Heart left ventricle (tissue), 16 donors: ENCODE measurements at regions of chr17 and their contacts with region 1.

Region 1: DNA sequence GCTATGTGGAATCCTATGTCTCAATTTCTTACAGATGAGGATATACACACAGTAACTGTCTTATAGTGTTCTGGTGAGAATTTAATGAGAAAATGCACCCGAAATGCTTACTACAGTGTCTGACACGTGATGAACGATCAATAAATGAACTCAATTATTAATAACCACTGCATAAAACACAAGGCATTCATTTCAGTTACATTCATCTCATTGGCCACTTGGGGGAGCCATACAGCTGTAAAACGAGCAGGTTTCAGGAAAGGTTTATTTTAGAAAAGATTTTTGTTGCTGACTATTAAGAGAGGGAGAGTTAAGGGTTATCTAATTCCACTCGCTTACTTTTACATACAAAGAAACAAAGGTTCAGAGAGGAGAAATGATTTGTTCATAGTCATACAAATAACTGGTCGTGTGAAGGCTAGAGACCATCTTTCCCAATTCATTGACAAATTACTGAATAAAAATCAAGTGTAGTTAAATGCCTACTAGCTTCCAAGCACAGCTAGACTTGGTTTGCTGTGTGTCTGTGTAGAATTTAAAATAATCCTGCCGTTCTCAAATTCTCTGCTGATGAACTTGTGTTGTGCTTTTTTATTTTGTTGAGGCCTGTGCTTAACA is 160.1 kb downstream of the MAP2K4 start:
- DNase-seq: peak in 1 of 5 donors; percentile 10
- ATAC-seq: peak in 2 of 4 donors; percentile 42 to 63
- H3K4me3 ChIP-seq: no peak overlapping the region
- H3K27ac ChIP-seq: no peak overlapping the region
- H3K4me1 ChIP-seq: peaks cover 0 to 7% (median 0%) of the 10 kb centered on the region in 12 donors
- H3K27me3 ChIP-seq: no peaks in the 10 kb centered on the region
- CTCF ChIP-seq: peak; percentile 51 to 79 (median 68)
- POLR2A ChIP-seq: no peak

Region 2: GRCh38 chr17:12256380-12256995 is 75.7 kb after region 1 on chr17:
- intact Hi-C with region 1: loop called in 1 of 10 experiments (anchors 10 kb)
- DNase-seq: peak in 3 of 5 donors; percentile 26 to 43 (median 29)
- ATAC-seq: peak; percentile 54 to 79 (median 72)
- H3K4me3 ChIP-seq: no peak overlapping the region
- H3K27ac ChIP-seq: peak overlapping the region in 1 of 12 donors; percentile 2
- H3K4me1 ChIP-seq: peaks cover 0 to 21% (median 0%) of the 10 kb centered on the region in 12 donors
- H3K27me3 ChIP-seq: no peaks in the 10 kb centered on the region
- CTCF ChIP-seq: peak; percentile 65 to 81 (median 75)
- POLR2A ChIP-seq: no peak

Region 3: GRCh38 chr17:12765548-12765947 is 584.8 kb after region 1 on chr17:
- intact Hi-C with region 1: loop called in 1 of 10 experiments (anchors 10 kb)
- DNase-seq: peak in 4 of 5 donors; percentile 25 to 73 (median 40)
- ATAC-seq: peak; percentile 81 to 88 (median 84)
- H3K4me3 ChIP-seq: no peak overlapping the region
- H3K27ac ChIP-seq: peak overlapping the region in 1 of 12 donors; percentile 8
- H3K4me1 ChIP-seq: peaks cover 0 to 10% (median 5%) of the 10 kb centered on the region in 12 donors
- H3K27me3 ChIP-seq: no peaks in the 10 kb centered on the region
- CTCF ChIP-seq: no peak
- POLR2A ChIP-seq: no peak